B cell (primary cell): ENCODE measurements at regions of chr11 and their contacts with region 1.

Region 1: GRCh38 chr11:128831174-128832120 is 35.6 kb downstream of the KCNJ1 start:
- DNase-seq: peak; percentile 88
- ATAC-seq: peak; percentile 89
- H3K4me3 ChIP-seq: peak overlapping the region; percentile 22 to 55 (median 36)
- H3K4me3 Mint-ChIP-seq: peak overlapping the region; percentile 74
- H3K27ac ChIP-seq: peak overlapping the region; percentile 60 to 78
- H3K27ac Mint-ChIP-seq: peak overlapping the region; percentile 90
- H3K4me1 ChIP-seq: peaks cover 66 to 68% of the 10 kb centered on the region in 2 donors
- H3K4me1 Mint-ChIP-seq: peaks cover 73% of the 10 kb centered on the region
- H3K27me3 ChIP-seq: no peaks in the 10 kb centered on the region
- H3K27me3 Mint-ChIP-seq: no peaks in the 10 kb centered on the region
- CTCF ChIP-seq: peak; percentile 93

Region 2: DNA sequence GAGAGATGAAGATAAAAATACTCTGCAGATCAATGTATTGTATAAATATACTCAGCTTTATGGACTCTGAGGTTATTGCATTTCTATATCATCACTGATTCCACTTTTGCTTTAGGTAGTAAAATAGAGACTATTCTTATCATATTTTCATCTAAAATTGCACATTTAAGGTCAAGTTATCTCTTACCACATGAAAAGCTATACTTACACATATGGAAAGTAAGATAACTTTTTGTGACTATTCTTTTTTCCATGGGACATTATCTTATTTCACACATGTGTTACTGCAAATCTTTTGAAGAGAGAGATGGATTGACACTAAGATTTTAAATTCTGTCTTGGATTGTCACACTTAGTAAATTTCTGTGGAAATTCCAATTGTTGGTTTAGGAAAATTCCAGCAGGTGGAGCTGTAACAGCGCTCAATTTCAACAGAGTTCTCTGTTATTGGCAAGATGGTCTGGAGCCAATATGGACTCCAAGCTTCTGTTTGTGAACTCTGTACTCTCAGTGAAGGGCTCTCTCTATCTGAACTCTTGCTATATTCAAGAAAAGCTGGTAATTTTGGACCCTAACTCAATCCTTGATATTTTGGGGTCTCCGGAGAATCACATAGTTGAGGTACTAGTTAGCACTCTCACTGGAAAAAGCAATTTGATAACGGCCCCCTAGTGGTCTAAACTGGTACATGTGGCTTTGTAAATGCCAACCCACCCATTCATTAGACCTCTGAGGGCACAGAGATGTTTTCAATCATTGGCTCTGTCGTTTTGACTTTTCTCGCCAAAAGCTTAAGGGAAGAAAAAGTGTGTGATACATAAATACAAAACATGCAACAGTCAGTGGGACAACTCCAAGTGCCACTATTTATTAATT is 673.8 kb before region 1 on chr11:
- CTCF ChIA-PET with region 1: interaction called, 63 read pairs
- POLR2A ChIA-PET with region 1: no interaction called
- intact Hi-C with region 1: loop called (anchors 1 kb)
- DNase-seq: peak; percentile 82
- ATAC-seq: peak; percentile 91
- H3K4me3 ChIP-seq: peak overlapping the region in 3 of 5 experiments; percentile 22 to 37 (median 23)
- H3K4me3 Mint-ChIP-seq: peak overlapping the region; percentile 81
- H3K27ac ChIP-seq: no peak overlapping the region
- H3K27ac Mint-ChIP-seq: no peak overlapping the region
- H3K4me1 ChIP-seq: peaks cover 0 to 3% of the 10 kb centered on the region in 2 donors
- H3K4me1 Mint-ChIP-seq: peaks cover 2% of the 10 kb centered on the region
- H3K27me3 ChIP-seq: peaks cover 0 to 7% (median 0%) of the 10 kb centered on the region in 4 experiments
- H3K27me3 Mint-ChIP-seq: peaks cover 15% of the 10 kb centered on the region
- CTCF ChIP-seq: peak; percentile 99

Region 3: DNA sequence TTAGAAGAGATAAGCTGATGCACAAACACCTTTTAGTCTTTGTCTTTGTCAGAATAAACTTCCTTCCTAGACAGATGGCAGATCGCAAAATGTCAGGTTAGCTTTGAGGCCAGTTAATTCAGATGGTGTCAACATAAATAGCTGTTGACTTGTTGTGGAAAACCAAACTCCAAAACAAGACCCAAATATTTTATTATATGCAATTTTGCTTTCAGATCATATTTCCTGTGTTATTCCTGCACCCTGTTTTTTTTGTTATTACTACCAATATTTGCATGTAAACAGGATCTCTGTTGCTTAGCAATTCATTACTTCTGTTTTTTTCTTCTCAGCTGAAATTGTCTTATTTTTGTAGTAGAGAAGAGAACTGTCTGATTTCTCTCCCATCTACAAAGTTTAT is 560.0 kb before region 1 on chr11:
- CTCF ChIA-PET with region 1: no interaction called
- POLR2A ChIA-PET with region 1: no interaction called
- intact Hi-C with region 1: no loop called
- DNase-seq: peak; percentile 76
- ATAC-seq: peak; percentile 57
- H3K4me3 ChIP-seq: peak overlapping the region in 1 of 5 experiments; percentile 32
- H3K4me3 Mint-ChIP-seq: peak overlapping the region; percentile 75
- H3K27ac ChIP-seq: peak overlapping the region; percentile 86 to 95
- H3K27ac Mint-ChIP-seq: peak overlapping the region; percentile 96
- H3K4me1 ChIP-seq: peaks cover 48 to 53% of the 10 kb centered on the region in 2 donors
- H3K4me1 Mint-ChIP-seq: peaks cover 53% of the 10 kb centered on the region
- H3K27me3 ChIP-seq: no peaks in the 10 kb centered on the region
- H3K27me3 Mint-ChIP-seq: no peaks in the 10 kb centered on the region
- CTCF ChIP-seq: no peak

Region 4: GRCh38 chr11:128522055-128522942 is 309.1 kb before region 1 on chr11:
- CTCF ChIA-PET with region 1: interaction called, 10 read pairs
- POLR2A ChIA-PET with region 1: no interaction called
- intact Hi-C with region 1: no loop called
- DNase-seq: peak; percentile 92
- ATAC-seq: peak; percentile 91
- H3K4me3 ChIP-seq: peak overlapping the region; percentile 79 to 98 (median 90)
- H3K4me3 Mint-ChIP-seq: peak overlapping the region; percentile 92
- H3K27ac ChIP-seq: peak overlapping the region; percentile 82 to 90
- H3K27ac Mint-ChIP-seq: peak overlapping the region; percentile 98
- H3K4me1 ChIP-seq: peaks cover 31 to 34% of the 10 kb centered on the region in 2 donors
- H3K4me1 Mint-ChIP-seq: peaks cover 61% of the 10 kb centered on the region
- H3K27me3 ChIP-seq: no peaks in the 10 kb centered on the region
- H3K27me3 Mint-ChIP-seq: no peaks in the 10 kb centered on the region
- CTCF ChIP-seq: no peak

Region 5: DNA sequence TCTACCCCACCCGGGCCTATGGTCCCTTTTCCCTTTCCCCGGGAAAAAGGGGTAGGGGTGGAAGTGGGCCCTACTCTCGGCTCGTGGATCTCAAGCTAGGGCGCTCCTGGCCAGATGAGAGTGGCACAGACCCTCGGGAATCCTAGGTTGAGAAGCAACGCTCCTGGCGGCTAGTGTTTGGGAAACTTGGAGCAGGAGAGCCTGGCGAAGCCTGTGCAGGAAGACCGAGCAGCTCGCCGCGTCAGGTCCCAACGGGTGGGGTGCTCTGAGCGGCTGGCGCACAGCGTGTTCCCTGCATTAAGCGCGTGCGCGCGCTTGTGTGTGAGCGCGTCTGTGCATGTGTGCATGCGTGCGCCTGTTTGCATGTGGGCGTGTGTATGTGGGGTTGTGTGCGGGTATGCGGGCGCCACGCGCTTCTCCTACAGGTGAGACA is 144.7 kb before region 1 on chr11:
- CTCF ChIA-PET with region 1: interaction called, 12 read pairs
- POLR2A ChIA-PET with region 1: no interaction called
- intact Hi-C with region 1: no loop called
- DNase-seq: peak; percentile 71
- ATAC-seq: peak; percentile 72
- H3K4me3 ChIP-seq: peak overlapping the region; percentile 9 to 79 (median 55)
- H3K4me3 Mint-ChIP-seq: peak overlapping the region; percentile 96
- H3K27ac ChIP-seq: no peak overlapping the region
- H3K27ac Mint-ChIP-seq: peak overlapping the region; percentile 32
- H3K4me1 ChIP-seq: peaks cover 36 to 37% of the 10 kb centered on the region in 2 donors
- H3K4me1 Mint-ChIP-seq: peaks cover 48% of the 10 kb centered on the region
- H3K27me3 ChIP-seq: peaks cover 0 to 43% (median 21%) of the 10 kb centered on the region in 4 experiments
- H3K27me3 Mint-ChIP-seq: peaks cover 38% of the 10 kb centered on the region
- CTCF ChIP-seq: no peak

Region 6: GRCh38 chr11:128745311-128746136 is 85.9 kb before region 1 on chr11:
- CTCF ChIA-PET with region 1: no interaction called
- POLR2A ChIA-PET with region 1: no interaction called
- intact Hi-C with region 1: no loop called
- DNase-seq: peak; percentile 13
- ATAC-seq: no peak
- H3K4me3 ChIP-seq: no peak overlapping the region
- H3K4me3 Mint-ChIP-seq: no peak overlapping the region
- H3K27ac ChIP-seq: peak overlapping the region in 1 of 2 donors; percentile 56
- H3K27ac Mint-ChIP-seq: peak overlapping the region; percentile 83
- H3K4me1 ChIP-seq: peaks cover 38 to 57% of the 10 kb centered on the region in 2 donors
- H3K4me1 Mint-ChIP-seq: peaks cover 79% of the 10 kb centered on the region
- H3K27me3 ChIP-seq: no peaks in the 10 kb centered on the region
- H3K27me3 Mint-ChIP-seq: no peaks in the 10 kb centered on the region
- CTCF ChIP-seq: no peak

Region 7: DNA sequence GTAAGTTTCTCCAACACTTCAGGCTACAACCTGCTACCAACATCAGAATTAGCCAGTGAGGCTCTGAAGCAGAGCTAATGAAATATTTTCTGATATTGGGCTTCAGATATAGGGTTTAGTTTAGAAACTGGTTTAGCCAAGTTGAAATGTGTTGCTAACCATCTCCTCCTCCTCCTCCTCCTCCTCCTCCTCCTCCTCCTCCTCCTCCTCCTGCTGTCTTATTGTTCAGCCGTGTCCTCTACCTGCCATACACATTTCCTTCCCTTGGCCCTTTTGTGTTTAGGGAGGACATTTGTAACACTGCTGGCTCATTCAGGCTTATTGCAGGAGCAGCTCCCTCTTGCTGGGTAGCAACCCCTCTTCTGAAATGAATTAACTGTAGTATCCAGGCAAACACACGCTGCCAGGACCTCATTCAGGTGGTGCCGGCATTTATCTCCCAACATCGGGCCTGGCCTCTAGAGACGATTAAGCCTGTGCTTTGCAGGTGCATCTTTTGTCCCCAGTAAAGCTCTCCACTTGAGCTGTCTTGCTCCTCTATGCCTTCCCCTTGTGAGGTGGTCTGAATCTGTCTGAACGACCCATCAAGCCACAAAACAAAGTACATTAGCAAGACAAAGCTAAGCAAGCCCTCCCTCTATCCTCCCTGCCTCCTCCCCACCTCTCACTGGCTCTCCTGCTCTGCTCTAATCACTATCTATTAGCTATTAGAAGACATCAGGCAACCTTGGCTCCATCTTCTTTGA is 47.2 kb before region 1 on chr11:
- CTCF ChIA-PET with region 1: interaction called, 13 read pairs
- POLR2A ChIA-PET with region 1: no interaction called
- intact Hi-C with region 1: no loop called
- DNase-seq: no peak
- ATAC-seq: no peak
- H3K4me3 ChIP-seq: no peak overlapping the region
- H3K4me3 Mint-ChIP-seq: no peak overlapping the region
- H3K27ac ChIP-seq: peak overlapping the region in 1 of 2 donors; percentile 2
- H3K27ac Mint-ChIP-seq: peak overlapping the region; percentile 76
- H3K4me1 ChIP-seq: no peaks in the 10 kb centered on the region
- H3K4me1 Mint-ChIP-seq: peaks cover 3% of the 10 kb centered on the region
- H3K27me3 ChIP-seq: no peaks in the 10 kb centered on the region
- H3K27me3 Mint-ChIP-seq: no peaks in the 10 kb centered on the region
- CTCF ChIP-seq: no peak

Region 8: DNA sequence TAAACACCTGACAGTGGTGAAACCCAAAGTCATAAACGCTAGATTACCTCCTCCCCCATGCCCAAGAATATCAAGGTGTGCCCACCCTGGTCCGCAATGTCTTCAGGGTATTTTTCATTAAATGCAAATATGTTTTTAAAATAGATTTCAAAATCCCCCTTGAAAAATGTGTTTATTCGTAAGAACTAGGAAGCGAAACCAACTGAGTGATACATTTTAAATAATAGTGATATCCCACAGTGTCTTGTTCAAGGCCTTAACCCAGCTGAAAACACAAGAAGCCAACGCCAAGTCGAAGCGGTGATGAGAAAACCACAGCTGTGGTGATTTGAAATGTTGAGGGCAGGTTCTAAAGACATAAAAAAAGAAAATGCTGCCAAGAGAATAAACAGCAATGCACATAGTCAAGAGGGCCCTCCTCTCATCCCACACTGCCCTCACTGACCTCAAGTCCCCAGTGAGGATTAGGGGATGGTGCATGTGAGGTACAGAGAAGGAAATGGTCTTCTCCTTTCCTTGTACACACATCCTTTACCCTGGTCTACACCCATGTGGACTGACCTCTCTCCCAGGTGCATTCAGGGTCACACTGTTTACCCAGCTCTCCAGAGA is 10.1 kb after region 1 on chr11:
- CTCF ChIA-PET with region 1: interaction called, 417 read pairs
- POLR2A ChIA-PET with region 1: interaction called, 4 read pairs
- intact Hi-C with region 1: loop called (anchors 1 kb)
- DNase-seq: peak; percentile 84
- ATAC-seq: peak; percentile 77
- H3K4me3 ChIP-seq: peak overlapping the region in 1 of 5 experiments; percentile 8
- H3K4me3 Mint-ChIP-seq: peak overlapping the region; percentile 70
- H3K27ac ChIP-seq: peak overlapping the region; percentile 94 to 95
- H3K27ac Mint-ChIP-seq: peak overlapping the region; percentile 95
- H3K4me1 ChIP-seq: peaks cover 96 to 100% of the 10 kb centered on the region in 2 donors
- H3K4me1 Mint-ChIP-seq: peaks cover 97% of the 10 kb centered on the region
- H3K27me3 ChIP-seq: no peaks in the 10 kb centered on the region
- H3K27me3 Mint-ChIP-seq: no peaks in the 10 kb centered on the region
- CTCF ChIP-seq: no peak

Region 9: GRCh38 chr11:128859563-128860441 is 28.4 kb after region 1 on chr11:
- CTCF ChIA-PET with region 1: interaction called, 417 read pairs
- POLR2A ChIA-PET with region 1: no interaction called
- intact Hi-C with region 1: loop called (anchors 2 kb)
- DNase-seq: peak; percentile 87
- ATAC-seq: peak; percentile 99
- H3K4me3 ChIP-seq: no peak overlapping the region
- H3K4me3 Mint-ChIP-seq: no peak overlapping the region
- H3K27ac ChIP-seq: no peak overlapping the region
- H3K27ac Mint-ChIP-seq: peak overlapping the region; percentile 59
- H3K4me1 ChIP-seq: peaks cover 9 to 17% of the 10 kb centered on the region in 2 donors
- H3K4me1 Mint-ChIP-seq: peaks cover 21% of the 10 kb centered on the region
- H3K27me3 ChIP-seq: no peaks in the 10 kb centered on the region
- H3K27me3 Mint-ChIP-seq: peaks cover 3% of the 10 kb centered on the region
- CTCF ChIP-seq: peak; percentile 100

Region 10: GRCh38 chr11:130403271-130403804 is 1571.9 kb after region 1 on chr11:
- CTCF ChIA-PET with region 1: no interaction called
- POLR2A ChIA-PET with region 1: no interaction called
- intact Hi-C with region 1: no loop called
- DNase-seq: no peak
- ATAC-seq: no peak
- H3K4me3 ChIP-seq: no peak overlapping the region
- H3K4me3 Mint-ChIP-seq: no peak overlapping the region
- H3K27ac ChIP-seq: no peak overlapping the region
- H3K27ac Mint-ChIP-seq: no peak overlapping the region
- H3K4me1 ChIP-seq: peaks cover 6 to 10% of the 10 kb centered on the region in 2 donors
- H3K4me1 Mint-ChIP-seq: peaks cover 10% of the 10 kb centered on the region
- H3K27me3 ChIP-seq: peaks cover 0 to 27% (median 5%) of the 10 kb centered on the region in 4 experiments
- H3K27me3 Mint-ChIP-seq: peaks cover 47% of the 10 kb centered on the region
- CTCF ChIP-seq: no peak